Psoas muscle (tissue), 8 donors: ENCODE measurements at regions of chr11 and their contacts with region 1.

Region 1: GRCh38 chr11:36123346-36124101 is 165.7 kb downstream of the COMMD9 start:
- DNase-seq: peak in 1 of 2 donors; percentile 18
- ATAC-seq: peak in 3 of 4 donors; percentile 13 to 63 (median 57)
- H3K4me3 ChIP-seq: no peak overlapping the region
- H3K27ac ChIP-seq: no peak overlapping the region
- H3K4me1 ChIP-seq: peaks cover 13% of the 10 kb centered on the region
- H3K27me3 ChIP-seq: no peaks in the 10 kb centered on the region
- CTCF ChIP-seq: no peak

Region 2: GRCh38 chr11:36056160-36056751 is 67.3 kb before region 1 on chr11:
- intact Hi-C with region 1: loop called in 1 of 2 experiments (anchors 10 kb)
- DNase-seq: no peak
- ATAC-seq: peak in 2 of 4 donors; percentile 65 to 72
- H3K4me3 ChIP-seq: no peak overlapping the region
- H3K27ac ChIP-seq: no peak overlapping the region
- H3K4me1 ChIP-seq: no peaks in the 10 kb centered on the region
- H3K27me3 ChIP-seq: no peaks in the 10 kb centered on the region
- CTCF ChIP-seq: peak; percentile 35

Region 3: GRCh38 chr11:36073411-36074203 is 49.9 kb before region 1 on chr11:
- intact Hi-C with region 1: no loop called
- DNase-seq: peak; percentile 74 to 90
- ATAC-seq: peak; percentile 94 to 98 (median 96)
- H3K4me3 ChIP-seq: peak overlapping the region; percentile 31
- H3K27ac ChIP-seq: peak overlapping the region; percentile 82
- H3K4me1 ChIP-seq: peaks cover 34% of the 10 kb centered on the region
- H3K27me3 ChIP-seq: no peaks in the 10 kb centered on the region
- CTCF ChIP-seq: no peak